ENCODE measurements at regions of chr14 and their contacts with region 1.

Region 1: GRCh38 chr14:23294734-23295561 is 7.7 kb downstream of the PPP1R3E start:
- DNase-seq: peak; percentile 61
- H3K4me3 Mint-ChIP-seq: no peak overlapping the region
- H3K27ac Mint-ChIP-seq: no peak overlapping the region
- H3K4me1 Mint-ChIP-seq: peaks cover 14% of the 10 kb centered on the region
- H3K27me3 Mint-ChIP-seq: no peaks in the 10 kb centered on the region

Region 2: GRCh38 chr14:23269193-23269592 is 25.8 kb before region 1 on chr14:
- CTCF ChIA-PET with region 1: interaction called, 9 read pairs
- intact Hi-C with region 1: loop called (anchors 1 kb)
- DNase-seq: no peak
- H3K4me3 Mint-ChIP-seq: no peak overlapping the region
- H3K27ac Mint-ChIP-seq: no peak overlapping the region
- H3K4me1 Mint-ChIP-seq: no peaks in the 10 kb centered on the region
- H3K27me3 Mint-ChIP-seq: no peaks in the 10 kb centered on the region